Sigmoid colon (tissue), 7 donors: ENCODE measurements at regions of chr22 and their contacts with region 1.

Region 1: DNA sequence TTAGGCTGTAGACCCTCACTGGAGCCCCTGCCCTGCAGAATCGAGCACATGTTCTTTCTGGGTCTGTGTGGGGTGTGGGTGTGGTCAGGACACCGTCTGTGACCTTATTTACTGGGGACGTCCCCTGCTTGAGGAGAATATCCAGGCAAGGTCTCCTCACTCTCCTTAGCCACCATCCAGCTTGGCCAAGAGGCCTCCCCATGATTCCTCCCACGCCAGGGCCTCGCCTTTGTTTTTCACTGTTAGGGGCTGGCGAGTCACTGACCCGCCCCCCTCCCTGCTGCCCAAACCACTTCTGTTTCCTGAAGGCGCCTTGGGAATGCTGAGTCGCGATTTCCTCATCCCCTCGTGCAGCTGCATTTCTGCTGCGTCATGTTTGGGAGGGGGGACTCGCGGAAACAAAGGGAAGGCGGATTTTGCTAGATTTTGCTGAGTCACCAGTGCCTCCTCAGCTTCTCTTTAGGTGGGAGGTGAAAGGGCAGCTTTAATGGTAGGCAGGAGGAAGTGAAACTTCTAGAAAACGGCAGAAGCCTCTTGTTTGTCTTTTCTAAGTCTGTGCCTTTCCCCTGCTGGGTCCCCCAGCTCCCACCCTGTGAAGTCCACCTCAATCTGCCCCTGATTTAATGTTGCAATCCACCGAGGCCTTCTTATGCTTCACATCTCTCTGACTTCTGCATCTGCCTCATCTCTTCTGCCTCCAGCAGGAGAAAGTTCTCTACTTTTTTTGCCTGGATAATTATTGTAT is 4.0 kb upstream of the HMOX1 start:
- DNase-seq: peak; percentile 98
- H3K4me3 ChIP-seq: peak overlapping the region in 2 of 4 donors; percentile 2 to 20
- H3K27ac ChIP-seq: peak overlapping the region; percentile 67 to 87 (median 76)
- H3K4me1 ChIP-seq: peaks cover 0 to 36% (median 30%) of the 10 kb centered on the region in 4 donors
- H3K27me3 ChIP-seq: no peaks in the 10 kb centered on the region
- CTCF ChIP-seq: no peak
- EP300 ChIP-seq: peak in 2 of 4 donors; percentile 60 to 90
- POLR2A ChIP-seq: no peak

Region 2: DNA sequence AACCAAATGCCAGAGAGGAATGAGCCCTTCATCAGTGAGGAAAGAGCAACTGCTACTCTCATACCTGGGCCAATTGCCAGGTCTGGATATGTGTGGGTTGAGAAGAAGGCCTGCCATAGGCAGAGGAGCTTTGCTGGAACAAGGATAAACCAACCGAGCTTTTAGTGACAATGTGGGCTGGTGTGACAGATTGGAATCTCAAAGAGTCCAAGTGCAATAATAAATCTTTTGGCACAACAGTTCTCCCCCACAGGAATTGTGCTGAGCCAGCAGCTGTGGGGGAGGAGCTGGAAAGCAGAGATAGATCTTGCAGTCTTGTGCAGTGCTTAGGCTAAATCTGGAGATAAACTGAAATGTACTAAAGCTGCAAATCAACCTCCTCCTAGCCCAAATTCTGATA is 390.4 kb before region 1 on chr22:
- intact Hi-C with region 1: no loop called
- DNase-seq: no peak
- H3K4me3 ChIP-seq: no peak overlapping the region
- H3K27ac ChIP-seq: no peak overlapping the region
- H3K4me1 ChIP-seq: no peaks in the 10 kb centered on the region
- H3K27me3 ChIP-seq: no peaks in the 10 kb centered on the region
- CTCF ChIP-seq: no peak
- EP300 ChIP-seq: no peak
- POLR2A ChIP-seq: no peak

Region 3: GRCh38 chr22:35357883-35358621 is 18.8 kb before region 1 on chr22:
- intact Hi-C with region 1: no loop called
- DNase-seq: no peak
- H3K4me3 ChIP-seq: no peak overlapping the region
- H3K27ac ChIP-seq: no peak overlapping the region
- H3K4me1 ChIP-seq: peaks cover 0 to 11% (median 0%) of the 10 kb centered on the region in 4 donors
- H3K27me3 ChIP-seq: peaks cover 0 to 17% (median 15%) of the 10 kb centered on the region in 3 donors
- CTCF ChIP-seq: no peak
- EP300 ChIP-seq: no peak
- POLR2A ChIP-seq: no peak

Region 4: DNA sequence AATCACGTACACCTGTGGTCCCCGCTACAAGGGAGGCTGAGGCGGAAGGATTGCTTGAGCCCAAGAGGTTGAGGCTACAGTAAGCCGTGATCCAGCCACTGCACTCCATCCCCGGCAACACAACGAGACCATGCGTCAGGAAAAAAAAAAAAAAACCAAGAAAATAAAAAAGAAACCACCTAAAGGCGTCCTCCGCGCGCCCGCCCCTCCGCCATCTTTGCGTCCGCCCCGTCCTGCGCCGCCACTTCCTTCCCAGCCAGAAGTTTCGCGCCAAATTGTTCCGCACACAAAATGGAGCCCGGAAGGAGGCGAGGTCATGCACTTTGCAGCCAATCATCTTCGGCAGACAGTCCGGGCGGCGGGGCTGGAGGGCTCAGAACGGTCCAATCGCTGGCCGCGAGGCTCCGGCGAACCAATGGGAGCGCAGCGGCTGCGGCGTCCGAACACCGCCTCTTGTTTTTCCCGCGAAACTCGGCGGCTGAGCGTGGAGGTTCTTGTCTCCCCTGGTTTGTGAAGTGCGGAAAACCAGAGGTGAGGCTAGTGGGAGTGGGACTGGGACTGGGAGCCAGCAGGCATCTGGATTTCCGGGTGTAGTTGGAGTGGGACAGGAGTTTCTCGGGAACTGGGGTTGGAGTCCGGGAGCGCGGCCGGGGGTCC is 22.9 kb after region 1 on chr22 and contains the start of gene MCM5:
- intact Hi-C with region 1: loop called (anchors 2 kb)
- DNase-seq: peak; percentile 99
- H3K4me3 ChIP-seq: peak within 1 kb of the TSS; percentile 62 to 94 (median 73)
- H3K27ac ChIP-seq: peak within 1 kb of the TSS; percentile 54 to 75 (median 66)
- H3K4me1 ChIP-seq: peaks cover 0 to 15% (median 10%) of the 10 kb centered on the region in 4 donors
- H3K27me3 ChIP-seq: no peaks in the 10 kb centered on the region
- CTCF ChIP-seq: no peak
- EP300 ChIP-seq: no peak
- POLR2A ChIP-seq: no peak
- total RNA-seq, gene MCM5: 10.0 to 15.0 (median 12.6) TPM